AG04450 (cell line): ENCODE measurements at regions of chr12 and their contacts with region 1.

Region 1: GRCh38 chr12:106251631-106252455 is 4.0 kb upstream of the CKAP4 start:
- DNase-seq: no peak
- H3K4me3 ChIP-seq: no peak overlapping the region
- H3K27ac ChIP-seq: peak overlapping the region; percentile 23
- H3K27me3 ChIP-seq: no peaks in the 10 kb centered on the region
- CTCF ChIP-seq: peak; percentile 23; the same call in 1 of the 2 replicates

Region 2: DNA sequence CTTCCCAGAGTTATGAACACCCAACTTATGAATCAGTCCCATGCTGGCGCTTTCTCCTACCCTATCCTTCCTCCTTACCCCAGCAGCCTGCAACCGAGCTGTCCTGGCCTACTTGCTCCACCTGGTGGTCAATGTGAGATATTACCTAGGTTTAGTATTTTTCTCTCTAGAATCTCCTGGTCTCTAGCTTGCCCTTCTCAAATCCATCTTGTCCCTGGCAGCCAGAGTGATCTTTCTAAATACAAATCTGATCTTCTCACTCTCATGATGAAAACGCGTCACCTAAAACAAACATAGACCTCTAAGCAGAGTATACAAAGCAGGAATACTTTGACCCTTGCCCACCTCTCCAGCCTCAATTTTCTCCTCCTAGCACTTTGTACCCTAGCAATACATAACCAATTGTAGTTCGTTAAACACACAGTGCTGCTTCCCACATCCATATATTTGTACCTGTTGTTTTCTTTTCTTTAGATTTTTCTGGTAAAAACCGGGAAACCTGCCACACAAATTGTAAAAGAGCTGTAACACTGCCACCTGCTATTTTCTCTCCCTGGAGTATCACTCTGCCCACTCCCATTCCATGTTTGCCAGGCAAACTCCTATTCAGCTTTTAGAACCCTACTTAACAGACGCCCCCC is 30.7 kb after region 1 on chr12:
- CTCF ChIA-PET with region 1: interaction called, 10 read pairs
- POLR2A ChIA-PET with region 1: interaction called, 6 read pairs
- DNase-seq: no peak
- H3K4me3 ChIP-seq: no peak overlapping the region
- H3K27ac ChIP-seq: no peak overlapping the region
- H3K27me3 ChIP-seq: peaks cover 3% of the 10 kb centered on the region
- CTCF ChIP-seq: peak; percentile 68